K562 (cell line): ENCODE measurements at regions of chr2 and their contacts with region 1.

Region 1: DNA sequence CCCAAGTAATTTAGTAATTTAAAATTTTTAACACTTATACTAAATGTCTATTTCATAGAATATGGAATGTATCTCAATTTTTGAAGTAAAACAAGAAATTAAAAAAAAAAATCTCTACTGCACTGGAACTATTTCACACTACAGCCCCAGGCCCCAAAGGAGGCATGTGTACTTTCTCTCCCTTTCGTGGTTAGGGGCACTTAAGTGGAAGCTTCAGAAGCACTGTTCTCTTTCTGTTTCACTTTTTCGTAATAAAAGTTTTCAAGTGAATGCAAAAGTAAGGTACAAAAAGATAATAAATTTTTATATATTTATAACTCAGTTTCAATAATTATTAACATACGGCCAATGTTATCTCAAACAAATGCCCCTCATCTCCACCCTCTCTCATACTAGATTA is 123.8 kb upstream of the STON1 start:
- DNase-seq: no peak
- ATAC-seq: no peak
- H3K4me3 ChIP-seq: no peak overlapping the region
- H3K27ac ChIP-seq: no peak overlapping the region
- H3K4me1 ChIP-seq: no peaks in the 10 kb centered on the region
- H3K27me3 ChIP-seq: no peaks in the 10 kb centered on the region
- CTCF ChIP-seq: no peak
- EP300 ChIP-seq: no peak
- POLR2A ChIP-seq: no peak
- RAD21 ChIP-seq: no peak

Region 2: GRCh38 chr2:48088994-48089393 is 317.1 kb before region 1 on chr2:
- CTCF ChIA-PET with region 1: interaction called, 12 read pairs
- POLR2A ChIA-PET with region 1: no interaction called
- in situ Hi-C with region 1: no loop called
- intact Hi-C with region 1: no loop called
- DNase-seq: no peak
- ATAC-seq: no peak
- H3K4me3 ChIP-seq: no peak overlapping the region
- H3K27ac ChIP-seq: no peak overlapping the region
- H3K4me1 ChIP-seq: no peaks in the 10 kb centered on the region
- H3K27me3 ChIP-seq: peaks cover 2 to 8% of the 10 kb centered on the region in 2 experiments; a peak in 1 of 5 replicates
- CTCF ChIP-seq: no peak
- EP300 ChIP-seq: no peak
- POLR2A ChIP-seq: no peak
- RAD21 ChIP-seq: no peak